Psoas muscle (tissue), 8 donors: ENCODE measurements at regions of chr9 and their contacts with region 1.

Region 1: GRCh38 chr9:131178382-131178781 is 53.0 kb downstream of the NUP214 start:
- DNase-seq: peak; percentile 63 to 82
- ATAC-seq: peak; percentile 91 to 97 (median 93)
- H3K4me3 ChIP-seq: no peak overlapping the region
- H3K27ac ChIP-seq: no peak overlapping the region
- H3K4me1 ChIP-seq: peaks cover 28% of the 10 kb centered on the region
- H3K27me3 ChIP-seq: no peaks in the 10 kb centered on the region
- CTCF ChIP-seq: peak; percentile 96

Region 2: GRCh38 chr9:131111854-131112311 is 66.5 kb before region 1 on chr9:
- intact Hi-C with region 1: no loop called
- DNase-seq: no peak
- ATAC-seq: no peak
- H3K4me3 ChIP-seq: no peak overlapping the region
- H3K27ac ChIP-seq: no peak overlapping the region
- H3K4me1 ChIP-seq: no peaks in the 10 kb centered on the region
- H3K27me3 ChIP-seq: peaks cover 0 to 5% (median 0%) of the 10 kb centered on the region in 3 donors
- CTCF ChIP-seq: no peak

Region 3: GRCh38 chr9:131277910-131278701 is 99.7 kb after region 1 on chr9:
- intact Hi-C with region 1: loop called in 1 of 2 experiments (anchors 5 kb)
- DNase-seq: peak; percentile 87 to 93
- ATAC-seq: peak; percentile 63 to 71 (median 66)
- H3K4me3 ChIP-seq: peak overlapping the region; percentile 70
- H3K27ac ChIP-seq: peak overlapping the region; percentile 98
- H3K4me1 ChIP-seq: peaks cover 38% of the 10 kb centered on the region
- H3K27me3 ChIP-seq: no peaks in the 10 kb centered on the region
- CTCF ChIP-seq: no peak

Region 4: DNA sequence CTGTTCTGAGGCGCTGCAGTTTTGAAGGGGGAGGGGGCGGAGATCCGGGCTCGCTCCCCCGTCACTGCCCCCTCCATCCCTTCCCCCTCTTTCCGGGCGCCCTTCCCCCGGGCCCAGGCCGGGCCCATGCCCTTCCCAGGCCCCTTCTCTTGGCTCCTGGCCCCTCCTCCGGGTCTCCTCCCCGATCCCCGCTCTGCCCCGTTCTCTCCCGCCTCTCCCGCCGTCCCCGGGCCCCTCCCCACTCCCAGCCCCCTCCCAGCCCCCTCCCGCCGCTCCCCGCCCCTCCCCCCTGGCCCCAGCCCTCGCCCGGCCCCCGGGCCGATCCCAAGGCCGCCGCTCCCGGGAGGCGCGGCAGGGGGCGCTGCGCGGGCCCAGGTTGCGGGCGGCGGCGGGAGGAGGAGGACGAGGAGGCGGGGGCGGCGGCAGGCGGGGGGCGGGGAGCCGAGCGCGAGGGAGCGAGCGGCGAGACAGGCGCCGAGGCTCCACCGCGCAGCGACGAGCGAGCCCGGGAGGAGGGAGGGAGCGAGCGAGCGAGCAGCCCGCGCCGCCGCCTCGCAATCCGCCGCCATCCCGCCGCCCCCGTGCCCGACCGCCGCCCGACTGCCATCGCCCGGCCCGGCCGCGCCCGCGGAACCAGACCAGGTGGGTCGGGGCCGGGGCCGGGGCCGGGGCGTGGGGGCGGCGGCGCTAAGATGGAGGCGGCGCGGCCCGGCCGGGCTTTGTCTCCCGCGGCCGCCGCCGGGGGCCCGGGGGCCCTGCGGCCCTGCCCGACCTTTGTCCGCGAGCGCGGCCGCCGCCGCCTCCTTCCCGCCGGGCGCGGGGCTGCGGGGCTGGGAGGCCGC is 215.5 kb after region 1 on chr9 and contains the start of gene PRRC2B:
- intact Hi-C with region 1: no loop called
- DNase-seq: peak; percentile 91 to 93
- ATAC-seq: peak; percentile 87 to 89 (median 88)
- H3K4me3 ChIP-seq: peak within 1 kb of the TSS; percentile 76
- H3K27ac ChIP-seq: peak within 1 kb of the TSS; percentile 95
- H3K4me1 ChIP-seq: peaks cover 45% of the 10 kb centered on the region
- H3K27me3 ChIP-seq: no peaks in the 10 kb centered on the region
- CTCF ChIP-seq: peak; percentile 58
- total RNA-seq, gene PRRC2B: 63.6 to 114 (median 78.7) TPM